ENCODE measurements at regions of chr6 and their contacts with region 1.

Region 1: DNA sequence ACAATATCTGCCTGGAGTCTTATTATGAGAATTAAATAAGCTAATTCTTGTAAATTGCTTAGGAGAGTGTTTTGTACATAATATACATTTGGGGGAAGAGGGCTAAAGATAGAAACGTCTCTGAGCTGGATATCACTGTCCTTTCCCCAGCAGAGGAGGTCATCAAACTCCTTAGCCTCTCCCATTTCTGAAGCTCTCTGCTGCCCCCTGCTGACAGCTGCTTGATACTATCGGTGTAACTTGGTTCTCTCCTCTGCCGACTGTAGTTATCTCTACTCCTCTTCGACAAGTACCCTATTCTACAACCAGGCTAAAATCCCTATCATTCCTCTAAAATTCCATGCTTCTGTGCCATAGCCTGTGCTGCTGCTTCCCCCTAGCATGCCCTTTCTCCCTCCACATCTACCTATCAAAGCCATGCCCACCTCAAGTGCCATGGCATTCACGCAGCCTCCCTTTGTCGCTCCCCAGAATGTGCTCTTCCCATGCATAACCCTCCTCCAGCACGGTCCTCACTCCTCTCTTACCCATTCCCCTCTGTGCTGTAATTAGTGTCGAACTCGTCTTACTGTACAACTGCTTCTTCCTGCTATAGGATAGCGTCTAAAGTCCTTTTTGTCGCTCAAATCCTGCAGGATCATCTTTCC is 101.2 kb downstream of the EPM2A start:
- DNase-seq: peak; percentile 78
- H3K4me3 ChIP-seq: no peak overlapping the region
- H3K27ac ChIP-seq: no peak overlapping the region
- H3K4me1 ChIP-seq: no peaks in the 10 kb centered on the region
- H3K27me3 ChIP-seq: no peaks in the 10 kb centered on the region
- CTCF ChIP-seq: peak; percentile 78 to 89
- POLR2A ChIP-seq: no peak

Region 2: DNA sequence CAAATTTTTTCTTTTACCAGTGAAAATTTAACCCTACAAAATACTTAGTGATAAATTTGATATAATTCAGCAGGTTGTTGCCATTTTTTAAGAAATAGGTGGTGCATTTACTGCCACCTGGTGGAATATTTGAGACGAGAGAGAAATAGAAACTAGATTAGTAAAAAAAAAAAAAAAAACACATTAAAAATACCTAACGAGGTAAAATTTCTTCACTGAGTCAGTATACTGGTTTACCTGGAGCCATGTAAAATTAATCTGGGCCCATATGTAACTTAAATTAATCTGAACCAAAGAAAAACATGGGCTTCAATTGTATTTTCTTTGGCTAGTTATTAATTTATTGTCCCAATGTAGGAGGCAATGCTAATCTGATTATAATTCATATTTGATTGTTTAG is 419.5 kb before region 1 on chr6:
- CTCF ChIA-PET with region 1: interaction called, 4 read pairs
- POLR2A ChIA-PET with region 1: no interaction called
- dilution Hi-C with region 1: no loop called
- intact Hi-C with region 1: loop called (anchors 2 kb)
- DNase-seq: peak; percentile 45
- H3K4me3 ChIP-seq: no peak overlapping the region
- H3K27ac ChIP-seq: no peak overlapping the region
- H3K4me1 ChIP-seq: no peaks in the 10 kb centered on the region
- H3K27me3 ChIP-seq: no peaks in the 10 kb centered on the region
- CTCF ChIP-seq: peak; percentile 18 to 27
- POLR2A ChIP-seq: no peak

Region 3: GRCh38 chr6:145621776-145622175 is 12.3 kb before region 1 on chr6:
- CTCF ChIA-PET with region 1: interaction called, 15 read pairs
- POLR2A ChIA-PET with region 1: no interaction called
- dilution Hi-C with region 1: no loop called
- intact Hi-C with region 1: no loop called
- DNase-seq: no peak
- H3K4me3 ChIP-seq: no peak overlapping the region
- H3K27ac ChIP-seq: no peak overlapping the region
- H3K4me1 ChIP-seq: no peaks in the 10 kb centered on the region
- H3K27me3 ChIP-seq: no peaks in the 10 kb centered on the region
- CTCF ChIP-seq: no peak
- POLR2A ChIP-seq: no peak

Region 4: GRCh38 chr6:145669627-145670034 is 35.5 kb after region 1 on chr6:
- CTCF ChIA-PET with region 1: interaction called, 13 read pairs
- POLR2A ChIA-PET with region 1: no interaction called
- dilution Hi-C with region 1: no loop called
- intact Hi-C with region 1: no loop called
- DNase-seq: peak; percentile 69
- H3K4me3 ChIP-seq: peak overlapping the region in 1 of 3 experiments; percentile 17
- H3K27ac ChIP-seq: peak overlapping the region; percentile 94
- H3K4me1 ChIP-seq: peaks cover 26% of the 10 kb centered on the region
- H3K27me3 ChIP-seq: no peaks in the 10 kb centered on the region
- CTCF ChIP-seq: no peak
- POLR2A ChIP-seq: no peak

Region 5: DNA sequence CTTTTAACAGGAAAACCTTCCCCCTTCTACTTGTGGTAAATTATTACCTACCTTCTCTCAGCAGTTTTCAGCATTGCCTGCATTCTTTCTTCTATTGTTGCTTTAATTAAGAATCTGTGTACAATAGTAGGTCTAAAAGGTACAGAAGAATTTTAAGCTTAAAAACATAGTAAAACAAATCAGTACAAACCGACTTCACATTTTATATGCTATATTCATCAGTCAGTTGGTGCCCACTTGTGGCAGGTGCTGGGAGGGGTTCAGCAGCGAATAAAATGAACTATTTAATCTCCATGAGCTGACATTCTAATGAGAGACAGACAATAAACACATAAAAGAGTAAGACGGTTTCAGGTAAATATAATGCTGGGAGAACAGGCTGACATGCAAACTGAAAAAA is 253.9 kb after region 1 on chr6:
- CTCF ChIA-PET with region 1: interaction called, 16 read pairs
- POLR2A ChIA-PET with region 1: no interaction called
- dilution Hi-C with region 1: no loop called
- intact Hi-C with region 1: no loop called
- DNase-seq: peak; percentile 70
- H3K4me3 ChIP-seq: no peak overlapping the region
- H3K27ac ChIP-seq: no peak overlapping the region
- H3K4me1 ChIP-seq: peaks cover 9% of the 10 kb centered on the region
- H3K27me3 ChIP-seq: no peaks in the 10 kb centered on the region
- CTCF ChIP-seq: peak; percentile 22 to 46
- POLR2A ChIP-seq: no peak

Region 6: DNA sequence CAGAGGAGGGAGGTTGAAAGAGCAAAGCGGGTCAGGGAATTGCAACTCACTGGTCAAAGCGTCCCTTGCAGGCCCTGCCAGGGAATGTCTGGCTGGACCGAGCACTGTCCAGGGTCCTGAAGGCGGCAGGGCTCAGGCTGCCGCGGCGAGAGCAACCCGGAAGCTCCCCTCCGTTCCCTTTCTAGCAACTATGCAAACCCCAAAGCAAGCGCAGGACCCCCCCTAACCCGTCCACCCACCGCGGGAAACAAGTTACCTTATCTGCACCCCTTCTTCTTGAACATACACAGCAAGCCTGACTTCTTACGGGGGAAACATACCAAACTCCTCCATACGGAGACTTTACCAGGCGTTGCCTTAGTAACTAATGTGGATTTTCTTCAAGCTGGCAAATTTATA is 394.2 kb after region 1 on chr6:
- CTCF ChIA-PET with region 1: no interaction called
- POLR2A ChIA-PET with region 1: no interaction called
- dilution Hi-C with region 1: no loop called
- intact Hi-C with region 1: no loop called
- DNase-seq: peak; percentile 52
- H3K4me3 ChIP-seq: no peak overlapping the region
- H3K27ac ChIP-seq: no peak overlapping the region
- H3K4me1 ChIP-seq: no peaks in the 10 kb centered on the region
- H3K27me3 ChIP-seq: peaks cover 19 to 20% of the 10 kb centered on the region in 2 experiments
- CTCF ChIP-seq: no peak
- POLR2A ChIP-seq: no peak